MCF 10A (cell line): ENCODE measurements at regions of chr1 and their contacts with region 1.

Region 1: GRCh38 chr1:104921525-104921924 is 1171.8 kb downstream of the AMY1C start:
- DNase-seq: peak; percentile 11
- H3K4me3 Mint-ChIP-seq: no peak overlapping the region
- H3K27ac Mint-ChIP-seq: no peak overlapping the region
- H3K4me1 Mint-ChIP-seq: no peaks in the 10 kb centered on the region
- H3K27me3 Mint-ChIP-seq: peaks cover 22% of the 10 kb centered on the region
- CTCF ChIP-seq: no peak

Region 2: DNA sequence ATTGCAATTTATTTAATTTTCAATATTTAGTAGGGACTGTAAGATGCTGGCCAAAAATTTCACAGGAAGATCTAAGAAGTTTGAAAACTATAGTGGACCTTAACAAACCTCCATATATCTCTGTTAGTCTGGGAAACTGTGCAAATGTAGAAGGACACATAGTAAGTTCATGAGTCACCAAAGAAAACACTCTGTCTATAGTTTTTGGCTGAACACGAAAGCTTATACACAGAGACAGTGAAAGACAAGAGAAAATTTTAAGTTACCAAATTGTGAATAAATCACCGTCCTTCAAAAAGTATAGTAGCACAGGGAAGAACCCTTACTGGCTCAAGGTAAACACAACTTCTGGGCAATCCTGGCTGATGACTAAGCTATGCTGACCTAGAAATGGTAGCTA is 114.0 kb before region 1 on chr1:
- CTCF ChIA-PET with region 1: no interaction called
- POLR2A ChIA-PET with region 1: no interaction called
- intact Hi-C with region 1: loop called (anchors 10 kb)
- DNase-seq: peak; percentile 38
- H3K4me3 Mint-ChIP-seq: no peak overlapping the region
- H3K27ac Mint-ChIP-seq: no peak overlapping the region
- H3K4me1 Mint-ChIP-seq: no peaks in the 10 kb centered on the region
- H3K27me3 Mint-ChIP-seq: no peaks in the 10 kb centered on the region
- CTCF ChIP-seq: no peak

Region 3: GRCh38 chr1:104868794-104869193 is 52.7 kb before region 1 on chr1:
- CTCF ChIA-PET with region 1: interaction called, 3 read pairs
- POLR2A ChIA-PET with region 1: no interaction called
- intact Hi-C with region 1: loop called (anchors 10 kb)
- DNase-seq: no peak
- H3K4me3 Mint-ChIP-seq: no peak overlapping the region
- H3K27ac Mint-ChIP-seq: no peak overlapping the region
- H3K4me1 Mint-ChIP-seq: no peaks in the 10 kb centered on the region
- H3K27me3 Mint-ChIP-seq: no peaks in the 10 kb centered on the region
- CTCF ChIP-seq: no peak

Region 4: DNA sequence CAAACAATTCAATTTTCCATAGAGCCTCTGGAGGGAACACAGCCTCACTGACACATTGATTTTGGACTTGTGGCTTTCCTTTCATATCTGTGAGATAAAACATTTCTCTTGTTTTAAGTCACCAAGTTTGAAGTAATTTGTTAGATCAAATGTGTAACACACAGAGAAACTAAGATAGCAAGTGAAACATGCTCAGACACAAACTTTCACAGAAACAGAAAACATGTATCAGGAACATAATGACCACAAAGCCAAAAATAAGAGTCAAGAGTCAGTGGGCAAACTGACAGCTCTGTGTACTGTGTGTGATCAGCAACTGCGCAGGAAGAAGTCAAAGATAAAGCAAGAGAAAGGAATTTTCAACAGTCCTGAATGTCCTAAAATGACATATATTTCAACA is 65.7 kb after region 1 on chr1:
- CTCF ChIA-PET with region 1: no interaction called
- POLR2A ChIA-PET with region 1: no interaction called
- intact Hi-C with region 1: loop called (anchors 10 kb)
- DNase-seq: no peak
- H3K4me3 Mint-ChIP-seq: no peak overlapping the region
- H3K27ac Mint-ChIP-seq: no peak overlapping the region
- H3K4me1 Mint-ChIP-seq: peaks cover 8% of the 10 kb centered on the region
- H3K27me3 Mint-ChIP-seq: no peaks in the 10 kb centered on the region
- CTCF ChIP-seq: no peak